Body of pancreas (tissue), 4 donors: ENCODE measurements at regions of chr5 and their contacts with region 1.

Region 1: DNA sequence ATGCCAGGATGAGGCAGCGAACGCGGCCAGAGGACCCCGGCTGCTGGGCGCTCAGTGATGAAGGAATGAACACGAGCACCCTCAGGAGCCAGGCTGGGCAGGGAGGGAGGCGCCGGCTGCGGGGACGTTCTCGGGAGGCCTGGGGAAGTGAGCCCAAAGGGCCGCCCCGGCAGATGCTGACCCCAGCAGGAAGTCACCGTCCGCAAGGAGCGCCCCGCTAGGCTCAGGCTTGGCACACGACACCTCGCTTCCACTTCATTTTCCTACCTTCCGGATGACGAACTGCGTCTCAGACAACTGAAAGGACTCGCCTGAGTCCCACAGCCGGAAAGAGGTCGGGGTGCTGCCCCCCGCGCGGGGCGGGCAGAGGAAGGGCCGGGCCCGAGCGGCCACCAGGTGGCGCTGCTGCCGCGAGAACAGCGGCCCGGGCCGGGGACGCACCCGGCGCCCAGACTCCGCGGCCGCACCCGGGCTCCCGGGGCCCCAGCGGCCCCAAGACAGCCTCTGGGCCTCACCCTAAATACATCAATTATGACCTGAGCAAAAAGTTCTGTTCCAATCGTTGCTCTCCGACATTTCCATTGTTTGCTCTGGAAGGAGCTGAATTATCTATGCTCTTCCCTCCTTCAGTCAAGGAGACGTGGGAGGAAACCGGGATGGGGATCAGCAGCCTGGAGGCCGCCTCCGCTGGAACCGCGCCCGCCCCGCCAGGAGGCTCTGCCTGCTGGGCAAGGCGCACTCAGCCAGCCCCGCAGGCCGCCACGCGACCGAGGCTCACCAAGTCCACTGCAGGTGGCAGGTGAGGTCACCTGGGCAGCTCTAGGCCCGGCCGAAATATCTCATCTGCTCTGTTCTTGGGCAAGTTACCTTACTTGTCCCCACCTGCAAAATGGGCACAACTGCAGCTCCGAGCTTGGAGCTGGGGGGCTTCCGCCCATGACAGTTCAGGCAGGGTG is 107.0 kb downstream of the ZNF354C start:
- DNase-seq: peak; percentile 26 to 66 (median 36)
- ATAC-seq: peak; percentile 63
- H3K4me3 ChIP-seq: no peak overlapping the region
- H3K27ac ChIP-seq: no peak overlapping the region
- H3K4me1 ChIP-seq: peaks cover 10% of the 10 kb centered on the region
- H3K27me3 ChIP-seq: no peaks in the 10 kb centered on the region
- CTCF ChIP-seq: peak; percentile 56 to 93 (median 68)
- POLR2A ChIP-seq: no peak

Region 2: DNA sequence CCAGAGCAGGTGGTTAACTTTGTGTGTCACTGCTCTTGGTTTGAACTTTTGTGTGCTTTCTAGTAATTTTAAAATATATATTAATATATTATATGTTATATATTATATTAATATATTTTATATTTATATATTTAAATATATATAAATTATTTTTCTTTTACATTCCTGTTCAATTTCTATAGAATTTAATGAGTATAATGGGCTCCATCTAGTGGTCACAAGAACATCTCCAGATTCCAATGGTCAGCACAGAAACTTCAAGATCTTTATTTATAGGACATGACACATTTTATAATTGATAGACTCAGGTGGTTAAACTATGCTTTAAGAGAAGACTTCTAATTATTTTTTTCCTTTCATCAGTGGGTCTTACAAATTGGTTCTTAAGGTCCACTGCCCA is 616.1 kb before region 1 on chr5:
- intact Hi-C with region 1: no loop called
- DNase-seq: no peak
- ATAC-seq: no peak
- H3K4me3 ChIP-seq: no peak overlapping the region
- H3K27ac ChIP-seq: no peak overlapping the region
- H3K4me1 ChIP-seq: no peaks in the 10 kb centered on the region
- H3K27me3 ChIP-seq: no peaks in the 10 kb centered on the region
- CTCF ChIP-seq: peak; percentile 8 to 74 (median 45)
- POLR2A ChIP-seq: no peak

Region 3: GRCh38 chr5:179495906-179496455 is 328.8 kb after region 1 on chr5:
- intact Hi-C with region 1: loop called (anchors 10 kb)
- DNase-seq: no peak
- ATAC-seq: no peak
- H3K4me3 ChIP-seq: no peak overlapping the region
- H3K27ac ChIP-seq: no peak overlapping the region
- H3K4me1 ChIP-seq: no peaks in the 10 kb centered on the region
- H3K27me3 ChIP-seq: no peaks in the 10 kb centered on the region
- CTCF ChIP-seq: no peak
- POLR2A ChIP-seq: no peak

Region 4: GRCh38 chr5:180126726-180127681 is 959.8 kb after region 1 on chr5:
- intact Hi-C with region 1: no loop called
- DNase-seq: peak in 1 of 4 donors; percentile 40
- ATAC-seq: peak; percentile 47
- H3K4me3 ChIP-seq: no peak overlapping the region
- H3K27ac ChIP-seq: no peak overlapping the region
- H3K4me1 ChIP-seq: peaks cover 6% of the 10 kb centered on the region
- H3K27me3 ChIP-seq: peaks cover 0 to 10% of the 10 kb centered on the region in 2 donors
- CTCF ChIP-seq: peak; percentile 59 to 77 (median 62)
- POLR2A ChIP-seq: no peak